Endothelial cell of umbilical vein (primary cell): ENCODE measurements at regions of chr1 and their contacts with region 1.

Region 1: GRCh38 chr1:168531615-168532345 is 12.0 kb downstream of the XCL2 start:
- DNase-seq: no peak
- H3K4me3 ChIP-seq: no peak overlapping the region
- H3K27ac ChIP-seq: no peak overlapping the region
- H3K4me1 ChIP-seq: no peaks in the 10 kb centered on the region
- H3K27me3 ChIP-seq: no peaks in the 10 kb centered on the region
- CTCF ChIP-seq: no peak
- POLR2A ChIP-seq: no peak

Region 2: GRCh38 chr1:168466092-168466713 is 65.6 kb before region 1 on chr1:
- CTCF ChIA-PET with region 1: no interaction called
- POLR2A ChIA-PET with region 1: no interaction called
- dilution Hi-C with region 1: no loop called
- intact Hi-C with region 1: no loop called
- DNase-seq: no peak
- H3K4me3 ChIP-seq: no peak overlapping the region
- H3K27ac ChIP-seq: no peak overlapping the region
- H3K4me1 ChIP-seq: no peaks in the 10 kb centered on the region
- H3K27me3 ChIP-seq: no peaks in the 10 kb centered on the region
- CTCF ChIP-seq: no peak
- POLR2A ChIP-seq: no peak

Region 3: DNA sequence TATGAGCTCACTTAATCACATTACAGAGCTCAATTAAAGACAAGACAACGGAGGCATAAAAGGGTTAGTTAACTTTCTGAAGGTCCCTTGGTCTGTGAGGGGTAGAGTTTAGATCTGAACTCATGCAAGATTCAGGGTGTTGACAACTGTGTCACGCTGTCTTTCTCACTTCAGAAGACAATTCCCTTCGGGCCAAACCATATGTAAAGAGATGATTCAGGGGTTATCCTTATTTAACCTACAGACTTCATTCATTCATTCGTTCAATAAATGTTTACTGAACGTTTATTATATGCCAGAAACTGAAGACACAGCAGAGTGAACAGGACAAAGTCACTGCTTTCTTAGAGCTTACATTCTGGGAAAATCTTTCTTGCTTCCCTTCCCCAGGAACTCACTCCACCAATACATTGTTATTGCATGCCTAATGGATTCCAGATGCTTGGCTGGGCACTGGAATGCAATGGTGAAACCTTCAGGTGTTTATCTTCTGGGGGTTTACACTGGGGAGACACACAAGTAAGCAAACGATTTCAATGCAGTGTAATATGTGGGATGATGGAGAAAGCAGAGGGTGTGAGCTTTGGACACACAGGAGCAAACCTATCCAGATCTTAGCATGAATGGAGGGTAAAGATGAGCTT is 51.0 kb after region 1 on chr1:
- CTCF ChIA-PET with region 1: no interaction called
- POLR2A ChIA-PET with region 1: no interaction called
- dilution Hi-C with region 1: no loop called
- intact Hi-C with region 1: loop called (anchors 5 kb)
- DNase-seq: no peak
- H3K4me3 ChIP-seq: no peak overlapping the region
- H3K27ac ChIP-seq: no peak overlapping the region
- H3K4me1 ChIP-seq: no peaks in the 10 kb centered on the region
- H3K27me3 ChIP-seq: peaks cover 0 to 4% of the 10 kb centered on the region in 2 experiments
- CTCF ChIP-seq: no peak
- POLR2A ChIP-seq: no peak

Region 4: DNA sequence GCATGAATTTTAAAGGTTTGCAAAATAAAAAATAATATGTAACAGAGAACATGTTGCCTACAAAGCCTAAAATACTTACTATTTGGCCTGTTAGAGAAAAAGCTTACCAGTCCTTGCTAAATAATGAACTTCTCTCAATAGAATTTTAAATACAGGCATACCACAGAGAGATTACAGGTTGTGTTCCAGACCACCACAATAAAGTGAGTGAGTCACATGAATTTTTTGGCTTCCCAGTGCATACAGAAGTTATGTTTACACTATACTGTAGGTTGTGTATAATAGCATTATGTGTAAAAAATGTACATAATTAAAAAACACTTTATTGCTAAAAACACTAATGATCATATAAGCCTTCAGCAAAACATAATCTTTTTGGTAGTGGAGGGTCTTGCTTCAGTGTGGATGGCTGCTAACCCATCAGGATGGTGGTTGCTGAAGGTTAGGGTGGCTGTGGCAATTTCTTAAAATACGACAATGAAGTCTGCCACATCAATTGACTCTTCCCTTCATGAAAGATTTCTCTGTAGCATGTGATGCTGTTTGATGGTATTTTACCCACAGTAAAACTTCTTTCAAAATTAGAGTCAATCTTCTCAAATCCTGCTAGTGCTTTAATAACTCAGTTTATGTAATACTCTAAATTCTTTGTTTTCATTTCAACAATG is 1313.3 kb after region 1 on chr1:
- CTCF ChIA-PET with region 1: no interaction called
- POLR2A ChIA-PET with region 1: no interaction called
- dilution Hi-C with region 1: no loop called
- intact Hi-C with region 1: no loop called
- DNase-seq: no peak
- H3K4me3 ChIP-seq: no peak overlapping the region
- H3K27ac ChIP-seq: no peak overlapping the region
- H3K4me1 ChIP-seq: no peaks in the 10 kb centered on the region
- H3K27me3 ChIP-seq: no peaks in the 10 kb centered on the region
- CTCF ChIP-seq: no peak
- POLR2A ChIP-seq: no peak